CD14-positive monocyte (primary cell): ENCODE measurements at regions of chr7 and their contacts with region 1.

Region 1: DNA sequence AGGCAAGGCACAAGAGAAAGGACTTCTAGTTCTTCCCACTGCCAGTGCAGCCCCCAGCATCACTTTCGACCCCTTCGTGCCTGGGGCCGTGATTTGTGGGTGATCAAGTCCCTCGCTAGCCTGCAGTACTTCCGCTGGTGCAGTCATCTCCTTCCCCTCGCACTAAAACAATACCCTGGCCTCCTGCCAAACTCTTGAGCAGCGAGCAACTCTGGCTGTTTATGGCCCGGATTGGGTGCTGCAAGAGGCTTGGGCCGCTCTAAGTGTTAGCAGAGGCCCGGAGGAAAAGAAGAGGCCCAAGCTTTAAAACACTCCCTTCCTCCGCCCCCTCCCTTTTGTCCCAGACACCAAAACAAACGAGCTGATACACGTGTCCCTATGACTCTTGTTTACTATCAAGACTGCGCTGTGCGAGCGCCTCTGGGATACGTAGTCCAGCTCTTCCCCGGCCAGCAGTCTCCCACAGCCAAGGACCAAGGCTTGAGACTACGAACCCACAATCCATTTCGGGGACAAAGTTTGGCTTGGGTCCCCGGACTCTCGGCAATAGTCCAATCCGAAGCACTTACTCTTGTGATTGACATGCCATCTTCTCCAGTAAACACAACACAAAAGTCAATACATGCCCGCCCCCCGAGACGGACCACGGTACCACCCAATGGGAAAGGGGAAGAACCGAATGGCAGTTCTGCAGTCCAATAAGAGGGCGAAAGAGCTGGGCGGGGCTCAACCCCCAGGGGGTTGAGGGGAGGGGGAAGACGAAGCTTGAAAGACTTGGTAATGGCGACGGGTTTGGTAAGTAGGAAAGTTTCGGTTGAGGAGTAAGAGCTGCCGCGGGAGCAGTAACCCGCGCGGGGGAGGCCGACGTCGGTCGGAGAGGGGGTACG is at the start of gene HBP1:
- DNase-seq: peak; percentile 99 to 100 (median 100)
- H3K4me3 ChIP-seq: peak within 1 kb of the TSS; percentile 85 to 99 (median 94)
- H3K4me3 Mint-ChIP-seq: peak within 1 kb of the TSS; percentile 92 to 95
- H3K27ac ChIP-seq: peak within 1 kb of the TSS; percentile 92 to 100
- H3K27ac Mint-ChIP-seq: peak within 1 kb of the TSS; percentile 98 to 100 (median 99)
- H3K4me1 ChIP-seq: peaks cover 14 to 18% of the 10 kb centered on the region in 2 donors
- H3K4me1 Mint-ChIP-seq: peaks cover 19% of the 10 kb centered on the region
- H3K27me3 ChIP-seq: no peaks in the 10 kb centered on the region
- H3K27me3 Mint-ChIP-seq: peaks cover 0 to 1% (median 0%) of the 10 kb centered on the region in 3 donors
- CTCF ChIP-seq: no peak
- polyA plus RNA-seq, gene HBP1: 41.2 to 52.9 (median 44.7) TPM

Region 2: GRCh38 chr7:106425017-106425719 is 743.3 kb before region 1 on chr7:
- intact Hi-C with region 1: loop called in 1 of 2 experiments (anchors 5 kb)
- DNase-seq: peak; percentile 98 to 100 (median 99)
- H3K4me3 ChIP-seq: peak overlapping the region in 2 of 3 experiments; percentile 10 to 14
- H3K4me3 Mint-ChIP-seq: peak overlapping the region; percentile 46 to 52
- H3K27ac ChIP-seq: peak overlapping the region; percentile 86 to 96
- H3K27ac Mint-ChIP-seq: peak overlapping the region; percentile 98 to 100 (median 99)
- H3K4me1 ChIP-seq: peaks cover 49 to 57% of the 10 kb centered on the region in 2 donors
- H3K4me1 Mint-ChIP-seq: peaks cover 56% of the 10 kb centered on the region
- H3K27me3 ChIP-seq: no peaks in the 10 kb centered on the region
- H3K27me3 Mint-ChIP-seq: peaks cover 0 to 2% (median 0%) of the 10 kb centered on the region in 3 donors
- CTCF ChIP-seq: no peak

Region 3: GRCh38 chr7:106865130-106866041 is 303.1 kb before region 1 on chr7 and contains the start of gene PIK3CG:
- intact Hi-C with region 1: loop called (anchors 5 to 10 kb)
- DNase-seq: peak; percentile 78 to 87 (median 83)
- H3K4me3 ChIP-seq: peak within 1 kb of the TSS; percentile 60 to 100 (median 92)
- H3K4me3 Mint-ChIP-seq: peak within 1 kb of the TSS; percentile 85 to 96
- H3K27ac ChIP-seq: peak within 1 kb of the TSS; percentile 42 to 91
- H3K27ac Mint-ChIP-seq: peak within 1 kb of the TSS; percentile 91 to 97 (median 94)
- H3K4me1 ChIP-seq: peaks cover 59 to 81% of the 10 kb centered on the region in 2 donors
- H3K4me1 Mint-ChIP-seq: peaks cover 75% of the 10 kb centered on the region
- H3K27me3 ChIP-seq: no peaks in the 10 kb centered on the region
- H3K27me3 Mint-ChIP-seq: no peaks in the 10 kb centered on the region
- CTCF ChIP-seq: no peak
- polyA plus RNA-seq, gene PIK3CG: 17.9 to 31.2 (median 20.7) TPM

Region 4: DNA sequence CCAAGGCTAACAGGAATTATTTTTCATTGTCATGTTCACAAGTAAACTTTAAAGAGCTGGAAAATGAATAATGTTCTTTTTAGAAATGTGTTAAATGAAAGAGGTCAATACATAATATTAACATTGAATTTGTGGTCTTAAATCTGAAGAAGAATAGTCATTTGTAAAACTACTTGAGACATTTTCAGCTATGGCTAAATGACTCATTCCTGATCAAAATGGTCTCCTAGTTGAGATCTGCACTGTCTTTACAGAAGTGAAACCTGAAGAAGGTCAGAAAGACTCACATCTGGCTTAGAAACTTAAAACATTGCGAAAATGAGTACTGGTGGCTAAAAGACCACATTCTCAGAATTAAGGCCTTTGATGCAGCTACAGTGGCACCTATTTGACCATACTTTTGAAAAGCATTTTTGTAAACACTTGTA is 297.5 kb before region 1 on chr7:
- intact Hi-C with region 1: loop called (anchors 5 to 10 kb)
- DNase-seq: peak; percentile 80 to 92 (median 92)
- H3K4me3 ChIP-seq: peak overlapping the region; percentile 17 to 57 (median 21)
- H3K4me3 Mint-ChIP-seq: peak overlapping the region; percentile 60 to 76
- H3K27ac ChIP-seq: peak overlapping the region in 1 of 2 donors; percentile 88
- H3K27ac Mint-ChIP-seq: peak overlapping the region; percentile 88 to 98 (median 92)
- H3K4me1 ChIP-seq: peaks cover 65 to 86% of the 10 kb centered on the region in 2 donors
- H3K4me1 Mint-ChIP-seq: peaks cover 76% of the 10 kb centered on the region
- H3K27me3 ChIP-seq: no peaks in the 10 kb centered on the region
- H3K27me3 Mint-ChIP-seq: no peaks in the 10 kb centered on the region
- CTCF ChIP-seq: no peak

Region 5: DNA sequence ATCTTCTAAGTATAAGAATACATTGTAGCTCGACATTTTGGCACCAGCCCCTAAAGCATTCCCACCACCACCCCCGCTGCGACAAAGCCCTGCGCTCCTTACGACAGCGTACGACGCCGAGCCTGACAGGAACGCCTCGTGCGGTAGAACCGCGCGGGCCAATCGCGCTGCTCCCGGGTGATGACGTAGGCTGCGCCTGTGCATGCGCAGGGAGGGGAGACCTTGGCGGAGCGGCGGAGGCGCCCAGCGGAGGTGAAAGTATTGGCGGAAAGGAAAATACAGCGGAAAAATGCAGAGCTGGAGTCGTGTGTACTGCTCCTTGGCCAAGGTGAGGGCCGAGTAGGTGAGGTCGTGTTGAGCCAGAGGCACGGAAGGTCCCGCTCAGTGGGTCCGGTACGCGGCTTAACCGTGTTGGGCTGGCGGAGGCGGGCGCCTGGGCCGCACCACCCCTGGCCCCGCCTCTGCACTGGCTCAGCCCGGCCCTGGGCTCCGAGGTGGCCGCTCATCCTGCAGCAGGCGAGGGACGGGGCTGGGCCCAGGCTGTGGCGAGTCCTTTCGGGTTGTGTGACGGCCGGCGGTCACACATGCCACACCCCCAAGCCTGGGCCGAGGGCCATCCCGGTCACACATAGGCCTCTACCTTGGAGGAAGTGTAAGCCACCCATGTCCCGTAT is 722.6 kb after region 1 on chr7 and contains the start of gene DLD:
- intact Hi-C with region 1: loop called in 1 of 2 experiments (anchors 10 kb)
- DNase-seq: peak; percentile 87 to 91 (median 91)
- H3K4me3 ChIP-seq: peak within 1 kb of the TSS; percentile 43 to 80 (median 54)
- H3K4me3 Mint-ChIP-seq: peak within 1 kb of the TSS; percentile 94 to 97
- H3K27ac ChIP-seq: peak within 1 kb of the TSS; percentile 86 to 95
- H3K27ac Mint-ChIP-seq: peak within 1 kb of the TSS; percentile 99 to 100 (median 100)
- H3K4me1 ChIP-seq: peaks cover 27 to 34% of the 10 kb centered on the region in 2 donors
- H3K4me1 Mint-ChIP-seq: peaks cover 33% of the 10 kb centered on the region
- H3K27me3 ChIP-seq: no peaks in the 10 kb centered on the region
- H3K27me3 Mint-ChIP-seq: peaks cover 0 to 3% (median 0%) of the 10 kb centered on the region in 3 donors
- CTCF ChIP-seq: no peak
- polyA plus RNA-seq, gene DLD: 54.5 to 73.6 (median 70.1) TPM